Endothelial cell of umbilical vein (primary cell): ENCODE measurements at regions of chr1 and their contacts with region 1.

Region 1: DNA sequence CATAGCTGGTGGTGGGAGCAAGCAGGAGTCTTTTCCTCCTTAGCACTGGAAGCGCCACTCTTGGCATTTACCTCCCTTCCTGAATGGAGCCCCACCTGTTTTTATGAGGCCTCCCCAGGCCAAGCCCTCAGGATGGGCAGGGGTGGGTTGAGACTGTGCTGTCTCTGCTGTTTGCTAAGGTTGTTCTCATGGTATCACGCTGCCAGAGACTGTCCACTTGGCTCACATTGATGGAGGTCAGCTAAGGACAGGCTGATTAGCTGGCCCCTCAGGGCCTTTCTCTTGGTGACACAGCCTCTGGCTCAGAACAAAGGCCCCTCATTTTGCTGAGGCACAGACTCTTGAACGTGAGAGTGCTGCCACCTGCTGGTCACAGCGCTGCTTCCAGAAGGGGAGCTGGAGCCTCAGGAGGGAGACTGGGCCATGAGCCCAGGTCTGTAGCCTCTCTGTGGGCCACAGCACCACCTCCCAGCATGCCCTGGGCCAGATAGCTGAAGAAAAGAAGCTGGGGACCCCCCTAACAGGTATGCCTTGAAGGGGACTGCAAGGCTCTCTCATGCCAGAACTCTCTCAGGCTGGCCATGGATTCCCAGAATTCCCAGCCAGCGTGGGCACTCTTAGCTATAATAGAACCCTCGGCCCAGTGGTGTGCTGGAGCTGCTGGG is 85.6 kb downstream of the CD58 start:
- DNase-seq: peak; percentile 81
- H3K4me3 ChIP-seq: no peak overlapping the region
- H3K27ac ChIP-seq: no peak overlapping the region
- H3K4me1 ChIP-seq: peaks cover 34% of the 10 kb centered on the region
- H3K27me3 ChIP-seq: no peaks in the 10 kb centered on the region
- CTCF ChIP-seq: peak; percentile 91 to 94
- POLR2A ChIP-seq: no peak

Region 2: GRCh38 chr1:116151739-116152576 is 333.2 kb before region 1 on chr1:
- CTCF ChIA-PET with region 1: interaction called, 80 read pairs
- POLR2A ChIA-PET with region 1: interaction called, 3 read pairs
- dilution Hi-C with region 1: no loop called
- intact Hi-C with region 1: loop called (anchors 1 kb)
- DNase-seq: peak; percentile 78
- H3K4me3 ChIP-seq: peak overlapping the region; percentile 34 to 42 (median 37)
- H3K27ac ChIP-seq: peak overlapping the region; percentile 84
- H3K4me1 ChIP-seq: peaks cover 16% of the 10 kb centered on the region
- H3K27me3 ChIP-seq: peaks cover 5 to 9% of the 10 kb centered on the region in 2 experiments
- CTCF ChIP-seq: peak; percentile 88 to 90
- POLR2A ChIP-seq: no peak

Region 3: GRCh38 chr1:116334015-116334547 is 151.1 kb before region 1 on chr1:
- CTCF ChIA-PET with region 1: interaction called, 10 read pairs
- POLR2A ChIA-PET with region 1: no interaction called
- dilution Hi-C with region 1: no loop called
- intact Hi-C with region 1: no loop called
- DNase-seq: peak; percentile 49
- H3K4me3 ChIP-seq: no peak overlapping the region
- H3K27ac ChIP-seq: no peak overlapping the region
- H3K4me1 ChIP-seq: peaks cover 21% of the 10 kb centered on the region
- H3K27me3 ChIP-seq: no peaks in the 10 kb centered on the region
- CTCF ChIP-seq: no peak
- POLR2A ChIP-seq: no peak

Region 4: DNA sequence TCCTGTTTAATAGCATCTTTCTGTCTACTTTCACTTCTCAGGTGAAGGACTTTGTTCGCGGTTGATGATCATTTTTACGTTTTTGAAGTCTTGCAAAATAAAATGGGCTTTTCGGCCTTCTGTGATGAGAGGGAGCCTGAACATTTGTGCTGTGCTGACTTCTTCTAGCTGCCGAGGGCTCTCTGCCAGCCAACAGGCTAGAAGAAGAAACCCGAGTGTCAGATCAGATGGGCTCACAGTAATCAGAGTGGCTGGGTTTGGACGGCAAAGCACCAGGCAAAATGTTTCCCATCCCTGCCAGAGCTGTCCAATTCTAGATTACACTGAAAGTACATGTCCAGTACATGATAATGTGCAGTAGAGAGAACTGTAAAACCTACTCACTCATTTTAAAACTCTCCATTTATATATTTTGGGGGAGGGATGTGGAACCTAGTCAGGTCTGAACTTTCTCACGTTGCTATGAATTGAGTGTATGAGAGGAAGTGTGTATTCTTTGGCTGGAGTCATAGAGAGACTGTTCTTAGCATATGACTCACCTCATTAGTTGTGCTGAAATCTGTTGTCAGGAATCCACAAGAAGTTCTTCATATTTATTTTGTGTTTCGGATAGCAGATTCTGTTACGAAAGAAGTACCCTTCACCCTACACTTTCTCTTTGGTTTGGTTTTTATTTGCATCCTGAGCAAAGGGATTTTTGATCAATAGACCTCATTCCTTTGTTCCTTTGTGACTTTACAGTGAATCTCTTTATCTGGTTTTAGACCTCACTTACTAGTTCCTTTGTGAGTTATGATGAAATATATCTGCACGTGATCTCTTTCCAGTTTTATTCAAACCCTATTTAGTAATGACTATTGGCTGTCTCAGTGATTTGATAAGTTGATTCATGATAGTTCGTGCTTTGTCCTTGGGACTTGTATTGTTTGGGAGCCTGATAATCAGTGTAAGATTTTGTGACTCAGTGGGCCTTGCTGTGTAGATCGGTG is 107.4 kb before region 1 on chr1:
- CTCF ChIA-PET with region 1: interaction called, 38 read pairs
- POLR2A ChIA-PET with region 1: no interaction called
- dilution Hi-C with region 1: loop called (anchors 25 kb)
- intact Hi-C with region 1: loop called (anchors 1 kb)
- DNase-seq: peak; percentile 94
- H3K4me3 ChIP-seq: peak overlapping the region in 1 of 3 experiments; percentile 94
- H3K27ac ChIP-seq: peak overlapping the region; percentile 96
- H3K4me1 ChIP-seq: peaks cover 70% of the 10 kb centered on the region
- H3K27me3 ChIP-seq: no peaks in the 10 kb centered on the region
- CTCF ChIP-seq: no peak
- POLR2A ChIP-seq: no peak

Region 5: DNA sequence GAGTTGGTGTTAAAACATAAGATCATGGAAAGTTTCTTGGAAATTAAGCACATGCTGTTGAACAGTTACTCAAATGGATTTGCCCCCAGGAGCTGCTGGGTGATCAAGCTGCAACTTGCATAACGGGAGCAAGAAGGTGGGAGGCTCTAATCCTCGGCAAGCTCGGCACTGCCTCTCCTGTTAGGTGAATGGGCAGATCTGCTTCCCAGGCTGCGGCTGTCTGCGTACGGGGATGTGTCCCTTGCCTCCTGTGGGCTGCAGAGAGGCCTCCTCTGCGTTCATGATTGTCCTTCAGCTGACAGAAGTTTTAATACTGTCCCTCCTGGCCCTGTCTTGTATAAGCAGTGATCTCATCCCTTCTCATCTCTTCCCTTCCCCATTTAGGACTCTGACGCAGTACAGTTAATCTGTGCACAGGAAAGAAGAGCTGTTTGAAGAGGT is 75.4 kb before region 1 on chr1:
- CTCF ChIA-PET with region 1: interaction called, 97 read pairs
- POLR2A ChIA-PET with region 1: no interaction called
- dilution Hi-C with region 1: no loop called
- intact Hi-C with region 1: loop called (anchors 1 kb)
- DNase-seq: no peak
- H3K4me3 ChIP-seq: no peak overlapping the region
- H3K27ac ChIP-seq: no peak overlapping the region
- H3K4me1 ChIP-seq: no peaks in the 10 kb centered on the region
- H3K27me3 ChIP-seq: no peaks in the 10 kb centered on the region
- CTCF ChIP-seq: no peak
- POLR2A ChIP-seq: no peak

Region 6: DNA sequence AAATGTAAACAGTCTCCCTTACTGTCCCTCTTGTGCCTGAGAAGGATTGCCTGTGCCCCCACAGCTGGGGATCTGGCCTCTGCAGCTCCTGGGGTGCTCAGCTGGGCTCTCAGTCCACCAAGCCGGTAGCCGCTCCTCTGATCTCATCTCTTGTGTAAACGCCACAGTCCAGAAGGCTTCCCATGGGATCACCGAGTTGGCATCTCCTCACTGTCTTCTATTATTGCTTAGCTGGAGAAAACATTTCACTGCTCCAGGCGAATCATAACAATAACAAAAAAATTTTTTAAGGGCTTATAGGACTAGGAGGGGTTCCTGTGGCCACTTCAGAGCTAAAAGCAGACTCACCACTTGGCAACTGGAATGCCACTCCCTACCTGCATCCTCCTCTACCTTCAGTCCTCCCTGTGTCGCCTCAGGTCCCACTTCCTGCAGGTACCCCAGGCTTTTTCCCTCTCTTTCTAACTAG is 36.4 kb before region 1 on chr1:
- CTCF ChIA-PET with region 1: interaction called, 14 read pairs
- POLR2A ChIA-PET with region 1: no interaction called
- dilution Hi-C with region 1: no loop called
- intact Hi-C with region 1: no loop called
- DNase-seq: no peak
- H3K4me3 ChIP-seq: no peak overlapping the region
- H3K27ac ChIP-seq: no peak overlapping the region
- H3K4me1 ChIP-seq: no peaks in the 10 kb centered on the region
- H3K27me3 ChIP-seq: no peaks in the 10 kb centered on the region
- CTCF ChIP-seq: no peak
- POLR2A ChIP-seq: no peak

Region 7: DNA sequence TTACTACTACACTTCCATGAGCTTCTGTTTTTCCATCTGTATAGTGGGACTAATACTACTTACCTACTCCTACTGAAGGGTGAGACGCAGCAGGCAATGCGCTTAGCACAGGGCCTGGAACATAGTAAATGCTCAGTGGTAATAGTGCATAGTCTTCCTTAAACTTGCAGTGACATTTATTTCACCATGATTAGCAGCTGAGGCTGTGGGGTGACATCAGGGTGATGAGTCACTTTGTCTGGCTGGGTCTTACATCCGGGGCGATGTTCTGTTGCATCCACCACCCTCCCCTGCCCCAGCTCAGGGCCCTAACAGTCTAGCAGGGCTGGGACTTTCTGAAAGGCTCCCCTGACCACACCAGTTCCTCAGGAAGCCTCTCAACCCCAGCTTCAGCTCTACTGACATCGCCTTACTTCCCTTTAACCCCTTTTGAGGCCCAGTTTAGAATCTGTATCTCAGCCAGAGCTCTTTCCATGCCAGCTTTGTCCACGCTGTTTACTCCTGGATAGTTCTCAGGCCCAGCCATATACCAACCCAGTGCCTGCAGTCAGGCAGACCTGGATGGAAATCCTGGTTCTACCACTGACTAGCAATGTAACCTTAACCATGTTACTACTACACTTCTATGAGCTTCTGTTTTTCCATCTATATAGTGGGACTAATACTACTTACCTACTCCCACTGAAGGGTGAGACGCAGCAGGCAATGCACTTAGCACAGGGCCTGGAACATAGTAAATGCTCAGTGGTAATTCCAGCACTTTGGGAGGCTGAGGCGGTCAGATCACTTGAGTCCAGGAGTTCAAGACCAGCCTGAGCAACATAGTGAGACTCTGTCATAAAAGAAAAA is 19.3 kb after region 1 on chr1:
- CTCF ChIA-PET with region 1: interaction called, 161 read pairs
- POLR2A ChIA-PET with region 1: interaction called, 5 read pairs
- dilution Hi-C with region 1: no loop called
- intact Hi-C with region 1: loop called (anchors 1 kb)
- DNase-seq: no peak
- H3K4me3 ChIP-seq: no peak overlapping the region
- H3K27ac ChIP-seq: no peak overlapping the region
- H3K4me1 ChIP-seq: peaks cover 22% of the 10 kb centered on the region
- H3K27me3 ChIP-seq: no peaks in the 10 kb centered on the region
- CTCF ChIP-seq: no peak
- POLR2A ChIP-seq: no peak